ENCODE measurements at regions of chr5 and their contacts with region 1.

Region 1: GRCh38 chr5:101796427-101796826 is 499.7 kb downstream of the SLCO4C1 start:
- DNase-seq: no peak
- H3K4me3 ChIP-seq: no peak overlapping the region
- H3K27ac ChIP-seq: no peak overlapping the region
- H3K4me1 ChIP-seq: no peaks in the 10 kb centered on the region
- H3K27me3 ChIP-seq: no peaks in the 10 kb centered on the region
- CTCF ChIP-seq: no peak

Region 2: GRCh38 chr5:101067429-101067828 is 729.0 kb before region 1 on chr5:
- CTCF ChIA-PET with region 1: no interaction called
- POLR2A ChIA-PET with region 1: no interaction called
- intact Hi-C with region 1: no loop called
- DNase-seq: no peak
- H3K4me3 ChIP-seq: no peak overlapping the region
- H3K27ac ChIP-seq: no peak overlapping the region
- H3K4me1 ChIP-seq: no peaks in the 10 kb centered on the region
- H3K27me3 ChIP-seq: no peaks in the 10 kb centered on the region
- CTCF ChIP-seq: no peak

Region 3: DNA sequence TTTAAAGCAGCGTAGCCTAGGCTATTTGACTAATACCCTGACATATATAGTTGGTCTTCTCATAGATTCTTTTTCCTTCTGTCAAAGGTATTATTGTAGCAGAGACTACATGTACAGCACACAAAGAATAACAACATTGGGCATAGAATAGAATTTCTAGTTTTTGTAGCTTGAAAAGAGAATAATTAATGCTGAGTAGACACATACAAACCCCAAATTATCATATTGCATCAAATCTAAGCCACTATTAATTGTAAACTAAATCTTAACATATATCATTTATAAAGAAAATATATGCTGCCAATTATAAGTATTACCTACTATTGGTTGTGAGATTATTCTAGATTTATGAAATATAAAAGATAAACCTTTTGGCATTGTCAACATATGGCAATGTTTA is 74.9 kb before region 1 on chr5:
- CTCF ChIA-PET with region 1: interaction called, 12 read pairs
- POLR2A ChIA-PET with region 1: no interaction called
- intact Hi-C with region 1: no loop called
- DNase-seq: no peak
- H3K4me3 ChIP-seq: no peak overlapping the region
- H3K27ac ChIP-seq: no peak overlapping the region
- H3K4me1 ChIP-seq: no peaks in the 10 kb centered on the region
- H3K27me3 ChIP-seq: no peaks in the 10 kb centered on the region
- CTCF ChIP-seq: no peak

Region 4: GRCh38 chr5:101783241-101784013 is 13.0 kb before region 1 on chr5:
- CTCF ChIA-PET with region 1: no interaction called
- POLR2A ChIA-PET with region 1: no interaction called
- intact Hi-C with region 1: no loop called
- DNase-seq: peak in 1 of 2 experiments; percentile 1
- H3K4me3 ChIP-seq: no peak overlapping the region
- H3K27ac ChIP-seq: no peak overlapping the region
- H3K4me1 ChIP-seq: no peaks in the 10 kb centered on the region
- H3K27me3 ChIP-seq: no peaks in the 10 kb centered on the region
- CTCF ChIP-seq: no peak

Measured in PC-9 (cell line).